Activated CD8-positive, alpha-beta memory T cell treated with anti-CD3 and anti-CD28 coated beads, Interleukin-2, amount 10 ng/mL, durations not matched to agents 7 days and 5 days (primary cell): ENCODE measurements at regions of chr12 and their contacts with region 1.

Region 1: GRCh38 chr12:120971299-120972179 is 6.8 kb upstream of the HNF1A start:
- DNase-seq: peak; percentile 62
- ATAC-seq: peak; percentile 91
- H3K4me3 Mint-ChIP-seq: no peak overlapping the region
- H3K27ac Mint-ChIP-seq: no peak overlapping the region
- H3K4me1 Mint-ChIP-seq: peaks cover 9% of the 10 kb centered on the region
- H3K27me3 Mint-ChIP-seq: no peaks in the 10 kb centered on the region

Region 2: DNA sequence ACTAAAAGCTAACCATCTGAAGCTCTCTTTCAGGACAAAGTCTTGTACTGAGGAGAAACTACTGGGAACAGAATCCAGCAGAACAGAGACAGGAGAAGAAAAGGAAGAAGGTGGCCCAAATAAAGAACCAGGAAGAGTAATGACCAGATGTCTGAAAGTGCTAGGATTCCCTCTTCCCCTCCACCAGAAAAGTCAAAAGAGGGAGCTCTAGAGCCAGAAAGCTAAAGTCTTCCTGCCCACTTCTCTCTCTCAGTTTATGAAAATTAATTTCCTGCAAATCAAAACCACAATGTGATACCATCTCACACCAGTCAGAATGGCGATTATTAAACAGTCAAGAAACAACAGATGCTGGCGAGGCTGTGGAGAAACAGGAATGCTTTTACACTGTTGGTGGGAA is 114.6 kb before region 1 on chr12:
- CTCF ChIA-PET with region 1: interaction called, 11 read pairs
- DNase-seq: no peak
- ATAC-seq: peak; percentile 39
- H3K4me3 Mint-ChIP-seq: no peak overlapping the region
- H3K27ac Mint-ChIP-seq: no peak overlapping the region
- H3K4me1 Mint-ChIP-seq: peaks cover 29% of the 10 kb centered on the region
- H3K27me3 Mint-ChIP-seq: no peaks in the 10 kb centered on the region

Region 3: DNA sequence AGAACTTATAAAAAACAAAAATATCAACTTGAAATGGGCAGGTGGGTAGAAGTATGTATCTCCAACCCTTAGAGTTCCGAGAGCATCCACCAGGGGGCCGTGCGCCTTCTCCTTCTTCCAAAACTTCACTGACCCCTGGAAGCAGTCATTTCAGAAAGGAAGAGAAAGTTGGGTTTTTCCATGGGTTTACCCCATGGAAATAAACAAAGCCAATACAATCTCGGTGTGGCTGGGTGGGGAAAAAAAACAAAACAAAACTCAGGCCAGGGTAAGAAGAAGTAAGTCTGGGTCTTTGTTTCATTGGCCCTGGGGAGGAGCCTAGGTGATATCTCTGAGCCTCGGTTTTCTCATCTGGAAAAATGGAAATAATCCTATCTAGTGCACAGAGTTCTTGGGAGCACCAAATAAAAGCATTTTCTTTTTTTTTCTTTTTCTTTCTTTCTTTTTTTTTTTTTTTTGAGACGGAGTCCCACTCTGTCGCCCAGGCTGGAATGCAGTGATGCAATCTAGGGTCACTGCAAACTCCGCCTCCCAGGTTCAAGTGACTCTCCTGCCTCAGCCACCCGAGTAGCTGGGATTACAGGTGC is 26.8 kb before region 1 on chr12:
- CTCF ChIA-PET with region 1: interaction called, 10 read pairs
- DNase-seq: peak; percentile 71
- ATAC-seq: peak; percentile 65
- H3K4me3 Mint-ChIP-seq: no peak overlapping the region
- H3K27ac Mint-ChIP-seq: no peak overlapping the region
- H3K4me1 Mint-ChIP-seq: peaks cover 4% of the 10 kb centered on the region
- H3K27me3 Mint-ChIP-seq: peaks cover under 1% of the 10 kb centered on the region

Region 4: DNA sequence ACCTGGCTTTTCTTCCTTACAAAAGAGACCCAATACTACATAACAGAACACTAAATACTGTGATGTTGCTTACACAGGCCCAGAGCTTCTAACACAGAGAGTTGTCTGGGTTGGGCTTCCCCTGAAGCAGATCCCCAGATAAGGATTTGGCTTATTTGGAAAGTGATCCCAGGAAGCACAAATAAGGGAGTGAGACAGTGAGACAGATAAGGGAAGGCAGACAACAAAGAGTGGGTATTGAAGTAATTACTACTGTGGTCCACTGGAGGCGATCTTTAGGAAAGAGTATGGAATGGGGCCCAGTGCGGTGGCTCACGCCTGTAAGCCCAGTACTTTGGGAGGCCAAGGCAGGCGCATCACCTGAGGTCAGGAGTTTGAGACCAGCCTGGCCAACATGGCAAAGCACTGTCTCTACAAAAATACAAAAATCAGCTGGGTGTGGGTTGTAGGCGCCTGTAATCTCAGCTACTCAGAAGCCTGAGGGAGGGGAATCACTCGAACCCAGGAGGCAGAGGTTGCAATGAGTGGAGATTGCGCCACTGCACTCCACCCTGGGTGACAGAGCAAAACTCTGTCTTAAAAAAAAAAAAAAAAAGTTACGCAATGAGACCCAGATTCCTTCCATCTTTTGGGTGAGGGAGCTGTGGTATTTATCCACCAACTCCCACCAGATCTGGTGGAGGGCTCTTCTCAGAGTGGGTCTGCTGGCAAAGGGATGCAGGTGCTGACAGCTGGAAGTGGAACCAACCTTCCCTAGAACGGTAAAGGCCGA is 54.9 kb after region 1 on chr12:
- CTCF ChIA-PET with region 1: no interaction called
- DNase-seq: no peak
- ATAC-seq: no peak
- H3K4me3 Mint-ChIP-seq: no peak overlapping the region
- H3K27ac Mint-ChIP-seq: peak overlapping the region; percentile 43
- H3K4me1 Mint-ChIP-seq: peaks cover 19% of the 10 kb centered on the region
- H3K27me3 Mint-ChIP-seq: no peaks in the 10 kb centered on the region